Activated naive CD4-positive, alpha-beta T cell treated with anti-CD3 and anti-CD28 coated beads for 36 hours (primary cell): ENCODE measurements at regions of chr10 and their contacts with region 1.

Region 1: DNA sequence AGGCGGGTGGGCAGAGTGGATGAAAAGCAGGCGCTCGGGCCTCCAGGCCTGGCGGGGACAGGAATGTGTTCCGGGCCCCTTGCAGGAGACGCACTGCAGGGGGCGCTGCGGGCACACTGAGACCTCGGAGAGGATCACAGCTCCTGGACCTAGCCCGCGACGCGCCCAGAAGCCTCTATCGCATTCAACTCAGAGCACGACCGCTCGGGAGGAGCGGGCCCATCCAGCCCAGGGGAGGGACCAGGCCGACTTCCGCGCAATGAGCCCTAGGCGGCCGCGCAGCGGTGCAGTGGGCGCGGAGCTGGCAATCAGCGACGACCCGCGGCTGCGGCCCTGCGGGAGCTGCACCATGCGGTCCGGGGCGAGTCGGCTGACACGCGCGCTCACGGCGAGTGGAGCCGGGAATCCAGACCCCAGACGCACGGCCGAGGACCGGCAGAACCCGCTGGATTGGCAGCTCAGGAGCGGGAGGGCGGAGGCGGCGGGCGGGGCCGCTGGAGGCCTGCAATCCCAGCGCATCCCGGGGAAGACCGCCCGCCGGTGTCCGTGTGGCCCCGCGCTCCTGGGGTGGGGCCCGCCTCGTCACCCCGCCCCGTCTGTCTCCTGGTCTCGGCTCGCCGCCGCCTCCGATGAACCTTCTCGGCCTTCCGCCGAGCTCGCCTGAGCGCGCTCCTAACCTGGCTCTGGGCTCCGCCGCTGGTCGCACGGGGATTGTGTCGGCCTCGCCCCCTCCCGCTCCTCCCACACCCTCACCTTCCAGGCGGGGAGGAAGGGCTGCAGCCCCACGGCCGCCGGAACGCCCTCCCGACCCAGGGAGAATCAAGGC is 33.5 kb upstream of the GRID1 start:
- DNase-seq: peak; percentile 98
- H3K4me3 Mint-ChIP-seq: peak overlapping the region; percentile 87
- H3K27ac Mint-ChIP-seq: peak overlapping the region; percentile 87
- H3K4me1 Mint-ChIP-seq: peaks cover 15% of the 10 kb centered on the region
- H3K27me3 Mint-ChIP-seq: no peaks in the 10 kb centered on the region

Region 2: GRCh38 chr10:86411281-86411841 is 11.3 kb after region 1 on chr10:
- CTCF ChIA-PET with region 1: interaction called, 55 read pairs
- intact Hi-C with region 1: loop called (anchors 1 kb)
- DNase-seq: peak; percentile 68
- H3K4me3 Mint-ChIP-seq: peak overlapping the region; percentile 60
- H3K27ac Mint-ChIP-seq: peak overlapping the region; percentile 85
- H3K4me1 Mint-ChIP-seq: peaks cover 45% of the 10 kb centered on the region
- H3K27me3 Mint-ChIP-seq: no peaks in the 10 kb centered on the region

Region 3: DNA sequence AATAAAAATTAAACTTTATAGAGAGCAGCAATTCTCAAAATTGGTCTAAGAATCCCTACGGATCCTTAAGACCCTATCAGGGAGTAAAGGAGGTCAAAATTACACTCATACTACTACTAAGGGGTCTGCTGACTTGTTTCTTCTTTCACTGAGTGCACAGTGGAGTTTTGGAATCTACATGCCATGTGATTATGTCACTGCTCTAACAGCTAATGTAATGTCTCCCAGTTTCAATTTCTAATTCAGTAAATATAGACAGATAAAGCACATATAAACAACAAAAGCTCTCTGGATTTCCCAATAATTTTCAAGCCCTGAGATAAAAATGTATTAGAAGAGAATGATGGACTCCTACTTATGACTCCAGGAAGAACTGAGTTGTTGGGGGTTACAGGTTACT is 46.9 kb after region 1 on chr10:
- CTCF ChIA-PET with region 1: interaction called, 4 read pairs
- intact Hi-C with region 1: loop called (anchors 2 kb)
- DNase-seq: no peak
- H3K4me3 Mint-ChIP-seq: no peak overlapping the region
- H3K27ac Mint-ChIP-seq: peak overlapping the region; percentile 48
- H3K4me1 Mint-ChIP-seq: peaks cover 34% of the 10 kb centered on the region
- H3K27me3 Mint-ChIP-seq: no peaks in the 10 kb centered on the region

Region 4: DNA sequence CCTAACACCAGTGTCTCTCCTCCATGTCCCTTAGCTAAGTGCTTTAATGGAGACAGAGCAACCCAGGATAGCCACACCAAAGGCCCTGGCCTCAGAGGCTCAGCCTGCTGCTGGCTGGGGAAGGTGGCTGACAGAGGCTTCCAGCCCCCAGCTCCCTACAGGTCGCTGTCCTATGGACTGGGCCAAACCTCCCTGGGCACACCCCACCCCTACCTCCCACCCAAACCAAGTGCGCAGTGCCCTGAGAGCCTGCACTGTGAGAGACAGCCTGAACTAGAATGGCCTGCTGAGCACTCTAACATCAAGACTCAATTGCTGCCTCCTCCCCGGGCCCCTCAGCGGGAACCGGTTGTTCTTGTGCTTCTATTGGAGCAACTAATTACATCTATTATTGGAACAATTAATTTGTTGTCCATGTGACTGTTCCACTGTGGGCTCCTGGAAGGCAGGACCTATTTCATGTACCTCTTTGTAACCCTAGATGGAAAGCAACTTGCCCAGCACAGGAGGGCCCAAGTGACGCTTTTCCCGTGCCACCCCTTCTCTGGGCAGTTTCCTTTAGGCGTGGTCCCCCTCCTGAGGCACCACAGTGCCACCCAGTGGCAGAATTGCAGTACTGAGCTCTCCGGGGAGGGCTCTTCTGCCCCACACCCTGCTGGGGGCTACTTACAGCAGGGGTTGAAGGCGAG is 185.1 kb after region 1 on chr10:
- CTCF ChIA-PET with region 1: interaction called, 56 read pairs
- intact Hi-C with region 1: loop called (anchors 1 kb)
- DNase-seq: peak; percentile 79
- H3K4me3 Mint-ChIP-seq: no peak overlapping the region
- H3K27ac Mint-ChIP-seq: no peak overlapping the region
- H3K4me1 Mint-ChIP-seq: no peaks in the 10 kb centered on the region
- H3K27me3 Mint-ChIP-seq: no peaks in the 10 kb centered on the region

Region 5: DNA sequence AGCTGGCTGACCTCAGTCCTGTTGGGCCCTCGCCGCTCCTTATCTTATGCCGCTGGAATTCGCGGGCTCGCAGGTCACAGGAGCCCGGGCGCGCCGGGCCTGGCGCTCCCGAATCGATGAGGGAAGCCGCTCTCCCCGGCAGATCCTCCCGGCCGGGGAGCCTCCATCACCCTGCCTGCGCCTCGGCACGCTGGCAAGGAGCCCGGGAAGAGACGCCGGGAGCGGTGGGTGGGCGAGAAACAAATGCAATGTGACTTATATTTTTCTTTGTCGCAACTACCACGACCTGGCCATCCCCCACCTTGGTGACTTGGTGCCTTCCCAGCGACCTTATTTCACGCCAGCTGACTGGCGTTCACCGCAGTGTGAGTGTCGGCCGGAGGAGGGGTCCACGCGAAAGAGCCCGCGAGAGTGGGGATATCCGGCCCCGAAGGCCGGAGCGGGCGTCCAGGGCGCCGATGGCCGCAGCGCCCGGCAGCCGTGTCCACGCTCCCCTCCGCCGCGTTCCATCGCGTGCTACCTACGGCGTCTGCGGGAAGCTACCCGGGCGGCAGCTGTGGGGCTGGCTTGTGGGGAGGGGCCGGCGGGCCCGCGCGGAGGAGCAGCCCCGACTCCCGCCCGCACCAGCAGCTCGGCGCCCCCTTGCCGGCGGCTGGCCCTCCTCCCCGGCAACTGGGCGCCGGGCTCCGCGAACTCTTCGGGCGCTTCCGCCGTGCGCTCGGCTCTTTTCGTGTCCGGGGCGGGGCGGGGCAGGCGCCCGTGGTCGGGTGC is 355.8 kb after region 1 on chr10:
- CTCF ChIA-PET with region 1: no interaction called
- intact Hi-C with region 1: loop called (anchors 5 kb)
- DNase-seq: peak; percentile 86
- H3K4me3 Mint-ChIP-seq: peak overlapping the region; percentile 76
- H3K27ac Mint-ChIP-seq: no peak overlapping the region
- H3K4me1 Mint-ChIP-seq: peaks cover 28% of the 10 kb centered on the region
- H3K27me3 Mint-ChIP-seq: peaks cover 31% of the 10 kb centered on the region

Region 6: GRCh38 chr10:87094373-87095235 is 694.5 kb after region 1 on chr10 and contains the starts of genes GLUD1 and SHLD2:
- CTCF ChIA-PET with region 1: no interaction called
- intact Hi-C with region 1: loop called (anchors 2 kb)
- DNase-seq: peak; percentile 93
- H3K4me3 Mint-ChIP-seq: peak within 1 kb of the TSS; percentile 96
- H3K27ac Mint-ChIP-seq: peak within 1 kb of the TSS; percentile 92
- H3K4me1 Mint-ChIP-seq: peaks cover 42% of the 10 kb centered on the region
- H3K27me3 Mint-ChIP-seq: no peaks in the 10 kb centered on the region
- total RNA-seq, gene GLUD1: 166 to 168 TPM
- total RNA-seq, gene SHLD2: 16.7 to 17.6 TPM